A673 (cell line): ENCODE measurements at regions of chr1 and their contacts with region 1.

Region 1: DNA sequence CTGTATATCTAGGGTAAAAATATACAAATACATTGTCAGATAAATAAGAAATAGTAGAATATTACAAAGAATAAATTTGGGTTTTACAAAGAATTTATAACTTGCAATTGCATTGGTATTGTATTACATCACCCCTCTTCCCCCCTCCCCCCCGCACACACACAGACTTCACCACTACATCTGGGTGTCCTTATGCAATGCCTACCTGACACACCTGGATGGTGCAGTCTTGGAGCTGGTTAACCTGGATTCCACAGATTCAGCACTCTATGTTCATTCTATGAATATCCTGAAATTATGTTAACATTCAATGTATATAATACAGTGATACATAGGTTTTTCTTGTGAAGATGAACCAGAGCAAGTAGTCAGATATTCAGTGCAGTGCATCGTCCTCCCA is 334.3 kb upstream of the NEGR1 start:
- DNase-seq: no peak
- H3K4me3 ChIP-seq: no peak overlapping the region
- H3K27ac ChIP-seq: no peak overlapping the region
- H3K4me1 ChIP-seq: no peaks in the 10 kb centered on the region
- H3K27me3 ChIP-seq: no peaks in the 10 kb centered on the region
- CTCF ChIP-seq: no peak

Region 2: DNA sequence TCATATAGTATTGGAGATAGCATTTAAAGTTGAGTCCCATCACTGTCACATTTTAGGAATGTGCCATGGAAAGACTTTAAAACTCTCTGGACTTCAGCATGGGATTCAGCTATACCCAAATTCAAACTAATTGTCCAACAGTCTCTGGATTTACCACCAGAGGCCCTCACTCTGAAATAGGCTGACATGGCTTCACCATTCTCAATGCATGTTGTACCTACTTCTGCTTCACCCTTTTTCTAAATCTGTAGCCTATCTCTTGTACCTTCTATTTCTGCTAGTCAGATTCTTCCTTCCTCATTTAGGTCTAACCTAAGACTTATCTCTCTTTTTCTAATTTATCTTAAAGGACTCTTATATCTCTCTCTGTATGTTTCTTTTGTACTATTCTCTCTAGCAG is 1023.2 kb before region 1 on chr1:
- CTCF ChIA-PET with region 1: no interaction called
- POLR2A ChIA-PET with region 1: no interaction called
- intact Hi-C with region 1: loop called (anchors 5 kb)
- DNase-seq: peak; percentile 58
- H3K4me3 ChIP-seq: no peak overlapping the region
- H3K27ac ChIP-seq: no peak overlapping the region
- H3K4me1 ChIP-seq: no peaks in the 10 kb centered on the region
- H3K27me3 ChIP-seq: no peaks in the 10 kb centered on the region
- CTCF ChIP-seq: peak; percentile 64

Region 3: GRCh38 chr1:72379072-72379471 is 237.6 kb before region 1 on chr1:
- CTCF ChIA-PET with region 1: no interaction called
- POLR2A ChIA-PET with region 1: no interaction called
- intact Hi-C with region 1: no loop called
- DNase-seq: no peak
- H3K4me3 ChIP-seq: no peak overlapping the region
- H3K27ac ChIP-seq: no peak overlapping the region
- H3K4me1 ChIP-seq: no peaks in the 10 kb centered on the region
- H3K27me3 ChIP-seq: no peaks in the 10 kb centered on the region
- CTCF ChIP-seq: no peak